ENCODE measurements at regions of chr17 and their contacts with region 1.

Region 1: DNA sequence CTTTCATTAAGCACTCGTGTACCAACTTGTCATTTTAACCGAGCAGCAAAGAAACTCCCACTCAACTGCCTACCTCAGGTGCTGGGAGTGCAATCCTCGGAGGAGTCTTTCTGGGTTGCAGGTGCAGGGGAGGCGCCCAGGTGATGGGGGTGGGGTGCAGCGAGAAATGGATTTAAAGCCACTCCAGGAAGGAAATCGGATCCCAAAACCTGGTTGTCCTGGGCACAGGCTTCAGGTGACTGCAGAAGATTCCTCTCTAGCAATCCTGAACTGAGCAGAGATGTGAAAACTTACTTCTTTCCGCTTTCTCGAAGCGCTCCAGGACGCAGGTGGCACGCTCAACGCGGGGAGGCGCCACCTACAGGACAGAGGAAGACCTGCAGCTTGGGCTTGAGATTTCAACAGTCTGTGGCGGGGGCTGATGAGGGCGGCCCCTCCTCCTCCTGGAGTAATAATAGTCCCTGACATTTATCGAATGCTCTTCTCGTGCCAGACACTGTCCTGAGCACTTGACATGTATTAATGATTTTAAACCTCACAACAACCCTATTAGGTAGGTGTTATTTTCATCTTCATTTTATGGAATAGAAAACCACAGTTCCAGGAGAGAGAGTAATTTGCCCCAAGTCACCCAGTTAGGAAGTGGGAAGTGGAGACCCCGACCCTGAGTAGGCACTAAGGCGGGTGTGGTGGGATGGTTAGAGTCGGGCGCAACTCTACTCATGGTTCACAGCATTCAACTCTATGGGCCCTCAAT is 27.2 kb upstream of the SKAP1 start:
- H3K4me3 ChIP-seq: peak overlapping the region; percentile 19; the same call in 1 of the 2 replicates
- H3K27ac ChIP-seq: no peak overlapping the region; the same call in 1 of the 2 replicates
- H3K4me1 ChIP-seq: peaks cover 9% of the 10 kb centered on the region
- CTCF ChIP-seq: peak; percentile 85

Region 2: DNA sequence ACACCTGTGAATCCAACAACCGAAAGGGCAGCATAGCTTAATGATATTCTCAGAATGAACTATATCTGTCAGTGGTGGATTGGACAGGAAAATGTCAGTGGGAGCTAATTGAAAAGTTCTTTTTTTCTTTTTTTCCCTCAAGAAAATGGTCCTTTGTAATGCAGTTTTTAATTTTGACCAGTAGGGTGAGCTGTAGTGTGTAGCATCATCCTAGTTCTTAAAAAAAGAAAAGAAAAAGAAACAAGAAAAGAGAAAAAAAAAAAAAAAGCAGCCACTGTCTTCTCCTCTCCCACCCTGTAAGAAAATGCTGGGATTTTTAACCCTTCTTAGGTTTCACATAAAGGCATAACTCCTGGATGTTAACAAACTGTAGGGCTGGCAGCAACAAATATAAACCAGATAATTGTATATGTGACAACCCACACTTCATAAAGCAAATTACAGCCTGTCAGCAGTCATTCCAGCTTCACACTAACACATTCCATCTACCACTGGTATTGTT is 105.4 kb before region 1 on chr17:
- CTCF ChIA-PET with region 1: interaction called, 16 read pairs
- POLR2A ChIA-PET with region 1: no interaction called
- H3K4me3 ChIP-seq: no peak overlapping the region
- H3K27ac ChIP-seq: no peak overlapping the region
- H3K4me1 ChIP-seq: peaks cover 3% of the 10 kb centered on the region; the same call in 1 of the 2 replicates
- CTCF ChIP-seq: no peak

Region 3: GRCh38 chr17:48441231-48441711 is 16.0 kb before region 1 on chr17:
- CTCF ChIA-PET with region 1: interaction called, 12 read pairs
- POLR2A ChIA-PET with region 1: no interaction called
- H3K4me3 ChIP-seq: no peak overlapping the region
- H3K27ac ChIP-seq: no peak overlapping the region
- H3K4me1 ChIP-seq: peaks cover 25% of the 10 kb centered on the region
- CTCF ChIP-seq: no peak

Region 4: GRCh38 chr17:48472411-48473281 is 15.4 kb after region 1 on chr17:
- CTCF ChIA-PET with region 1: interaction called, 29 read pairs
- POLR2A ChIA-PET with region 1: no interaction called
- H3K4me3 ChIP-seq: no peak overlapping the region
- H3K27ac ChIP-seq: no peak overlapping the region; the same call in 1 of the 2 replicates
- H3K4me1 ChIP-seq: peaks cover 15% of the 10 kb centered on the region
- CTCF ChIP-seq: no peak

Region 5: GRCh38 chr17:48478224-48479013 is 21.2 kb after region 1 on chr17:
- CTCF ChIA-PET with region 1: interaction called, 10 read pairs
- POLR2A ChIA-PET with region 1: no interaction called
- H3K4me3 ChIP-seq: no peak overlapping the region
- H3K27ac ChIP-seq: peak overlapping the region; percentile 18; the same call in 1 of the 2 replicates
- H3K4me1 ChIP-seq: peaks cover 10% of the 10 kb centered on the region
- CTCF ChIP-seq: no peak